GM12878 (cell line): ENCODE measurements at regions of chr17 and their contacts with region 1.

Region 1: DNA sequence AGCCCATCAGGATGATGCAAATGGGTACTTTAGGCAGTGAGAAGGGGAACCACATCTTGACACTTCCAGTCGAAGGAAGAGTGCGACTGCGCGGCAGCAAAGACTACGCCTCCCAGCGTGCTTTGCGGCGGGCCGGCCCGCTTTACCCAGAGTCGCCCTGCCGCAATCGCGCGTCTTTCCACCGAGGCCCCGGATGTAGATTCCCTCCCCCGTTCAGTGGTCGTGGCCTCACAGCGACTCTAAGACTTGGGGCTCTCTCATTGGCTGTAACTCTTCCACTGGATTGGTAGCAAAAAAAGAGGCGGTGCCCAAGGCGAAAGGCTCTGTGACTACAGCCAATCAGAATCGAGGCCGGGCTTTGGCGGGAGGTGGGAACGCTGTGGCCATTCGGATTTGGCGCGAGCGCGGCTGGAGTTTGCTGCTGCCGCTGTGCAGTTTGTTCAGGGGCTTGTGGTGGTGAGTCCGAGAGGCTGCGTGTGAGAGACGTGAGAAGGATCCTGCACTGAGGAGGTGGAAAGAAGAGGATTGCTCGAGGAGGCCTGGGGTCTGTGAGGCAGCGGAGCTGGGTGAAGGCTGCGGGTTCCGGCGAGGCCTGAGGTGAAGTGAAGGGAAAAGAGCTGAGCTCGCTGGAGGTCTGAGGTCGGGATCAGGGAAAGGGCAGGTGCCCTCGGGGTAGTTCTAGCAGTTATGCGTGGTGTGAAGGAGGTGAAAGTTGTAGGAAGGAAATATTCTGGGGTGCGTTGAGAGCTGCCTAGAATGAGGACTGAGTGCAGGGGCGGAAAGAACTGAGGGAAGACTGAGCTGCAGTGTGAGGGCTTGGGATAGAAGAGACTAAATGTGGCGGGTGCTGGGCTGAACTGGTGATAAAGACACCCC is at the start of gene CDC6:
- DNase-seq: peak; percentile 95
- ATAC-seq: peak; percentile 96
- H3K4me3 ChIP-seq: peak within 1 kb of the TSS; percentile 80
- H3K27ac ChIP-seq: peak within 1 kb of the TSS; percentile 79
- H3K4me1 ChIP-seq: peaks cover 9% of the 10 kb centered on the region
- H3K27me3 ChIP-seq: no peaks in the 10 kb centered on the region
- CTCF ChIP-seq: no peak
- EP300 ChIP-seq: no peak
- POLR2A ChIP-seq: peak; percentile 97
- RAD21 ChIP-seq: no peak
- polyA plus RNA-seq, gene CDC6: 13.3 to 18.6 TPM

Region 2: DNA sequence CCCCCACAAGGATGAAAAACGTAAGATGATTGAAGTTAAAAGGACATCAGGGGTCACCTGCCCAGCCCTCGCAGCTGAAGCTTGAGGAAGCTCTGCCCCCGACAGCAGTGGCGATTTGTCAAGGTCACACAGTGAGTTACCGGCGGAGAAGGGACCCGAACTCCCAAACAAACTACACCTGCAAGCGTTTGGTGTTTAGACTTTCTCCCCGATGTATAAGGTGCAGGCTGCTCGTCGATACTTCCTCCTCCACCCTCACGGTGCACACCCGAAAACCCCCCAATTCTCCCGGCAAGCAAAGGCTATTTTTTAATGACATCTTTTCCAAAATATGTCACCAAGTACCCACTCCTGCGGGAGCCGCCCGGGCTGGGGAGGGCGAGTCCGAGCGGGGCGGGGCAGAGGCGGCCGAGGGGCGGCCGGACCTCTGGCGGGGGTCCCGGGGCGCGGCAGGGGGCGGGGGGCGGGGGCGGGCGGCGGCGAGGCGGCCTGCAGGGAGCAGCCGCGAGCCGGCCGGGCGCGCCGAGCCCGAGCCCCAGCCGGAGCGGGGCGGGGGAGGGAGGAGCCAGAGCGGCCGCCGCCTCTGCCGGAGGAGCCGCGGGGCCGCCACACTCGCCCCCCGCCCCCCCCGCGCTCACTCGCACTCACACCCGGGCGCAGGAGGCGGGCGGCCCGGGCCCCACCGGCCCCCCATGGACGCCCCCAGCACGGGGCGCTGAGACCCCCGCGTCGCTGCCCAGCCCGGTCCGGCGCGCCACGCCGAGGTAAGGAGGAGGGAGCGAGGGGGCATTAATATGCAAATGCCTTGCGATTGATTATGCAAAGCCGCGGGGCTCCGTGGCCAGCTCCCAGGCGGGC is 225.2 kb before region 1 on chr17 and contains the start of gene THRA:
- CTCF ChIA-PET with region 1: no interaction called
- POLR2A ChIA-PET with region 1: no interaction called
- RAD21 ChIA-PET with region 1: no interaction called
- SMC1A ChIA-PET with region 1: no interaction called
- in situ Hi-C with region 1: no loop called
- intact Hi-C with region 1: no loop called
- DNase-seq: no peak
- ATAC-seq: peak; percentile 89
- H3K4me3 ChIP-seq: peak within 1 kb of the TSS; percentile 93
- H3K27ac ChIP-seq: no peak within 1 kb of the TSS
- H3K4me1 ChIP-seq: peaks cover 5% of the 10 kb centered on the region
- H3K27me3 ChIP-seq: peaks cover 10 to 11% of the 10 kb centered on the region in 2 experiments; a peak in 3 of 4 replicates
- CTCF ChIP-seq: peak in 1 of 3 experiments; percentile 27; a peak in 2 of 6 replicates
- EP300 ChIP-seq: no peak
- POLR2A ChIP-seq: no peak
- RAD21 ChIP-seq: no peak
- polyA plus RNA-seq, gene THRA: 0.03 to 0.07 TPM

Region 3: GRCh38 chr17:40191237-40192208 is 96.2 kb before region 1 on chr17:
- CTCF ChIA-PET with region 1: interaction called, 186 read pairs
- POLR2A ChIA-PET with region 1: interaction called, 4 read pairs
- RAD21 ChIA-PET with region 1: interaction called, 19 read pairs
- SMC1A ChIA-PET with region 1: interaction called, 30 read pairs
- in situ Hi-C with region 1: no loop called
- intact Hi-C with region 1: no loop called
- DNase-seq: peak; percentile 30
- ATAC-seq: peak; percentile 93
- H3K4me3 ChIP-seq: peak overlapping the region; percentile 83
- H3K27ac ChIP-seq: no peak overlapping the region
- H3K4me1 ChIP-seq: peaks cover 24% of the 10 kb centered on the region
- H3K27me3 ChIP-seq: no peaks in the 10 kb centered on the region; a peak in 1 of 4 replicates
- CTCF ChIP-seq: peak; percentile 82 to 91 (median 89)
- EP300 ChIP-seq: no peak
- POLR2A ChIP-seq: peak; percentile 57
- RAD21 ChIP-seq: peak; percentile 50; the same call in 1 of the 2 replicates

Region 4: GRCh38 chr17:40219073-40219860 is 68.5 kb before region 1 on chr17 and contains the start of gene WIPF2:
- CTCF ChIA-PET with region 1: interaction called, 27 read pairs
- POLR2A ChIA-PET with region 1: interaction called, 9 read pairs
- RAD21 ChIA-PET with region 1: interaction called, 10 read pairs
- SMC1A ChIA-PET with region 1: interaction called, 22 read pairs
- in situ Hi-C with region 1: no loop called
- intact Hi-C with region 1: loop called (anchors 5 kb)
- DNase-seq: peak; percentile 87
- ATAC-seq: peak; percentile 96
- H3K4me3 ChIP-seq: peak within 1 kb of the TSS; percentile 99
- H3K27ac ChIP-seq: peak within 1 kb of the TSS; percentile 73
- H3K4me1 ChIP-seq: peaks cover 4% of the 10 kb centered on the region; the same call in 1 of the 2 replicates
- H3K27me3 ChIP-seq: no peaks in the 10 kb centered on the region
- CTCF ChIP-seq: peak; percentile 33 to 45 (median 37); a peak in 4 of 6 replicates
- EP300 ChIP-seq: no peak
- POLR2A ChIP-seq: peak; percentile 82
- RAD21 ChIP-seq: no peak
- polyA plus RNA-seq, gene WIPF2: 4.2 to 5.5 TPM

Region 5: DNA sequence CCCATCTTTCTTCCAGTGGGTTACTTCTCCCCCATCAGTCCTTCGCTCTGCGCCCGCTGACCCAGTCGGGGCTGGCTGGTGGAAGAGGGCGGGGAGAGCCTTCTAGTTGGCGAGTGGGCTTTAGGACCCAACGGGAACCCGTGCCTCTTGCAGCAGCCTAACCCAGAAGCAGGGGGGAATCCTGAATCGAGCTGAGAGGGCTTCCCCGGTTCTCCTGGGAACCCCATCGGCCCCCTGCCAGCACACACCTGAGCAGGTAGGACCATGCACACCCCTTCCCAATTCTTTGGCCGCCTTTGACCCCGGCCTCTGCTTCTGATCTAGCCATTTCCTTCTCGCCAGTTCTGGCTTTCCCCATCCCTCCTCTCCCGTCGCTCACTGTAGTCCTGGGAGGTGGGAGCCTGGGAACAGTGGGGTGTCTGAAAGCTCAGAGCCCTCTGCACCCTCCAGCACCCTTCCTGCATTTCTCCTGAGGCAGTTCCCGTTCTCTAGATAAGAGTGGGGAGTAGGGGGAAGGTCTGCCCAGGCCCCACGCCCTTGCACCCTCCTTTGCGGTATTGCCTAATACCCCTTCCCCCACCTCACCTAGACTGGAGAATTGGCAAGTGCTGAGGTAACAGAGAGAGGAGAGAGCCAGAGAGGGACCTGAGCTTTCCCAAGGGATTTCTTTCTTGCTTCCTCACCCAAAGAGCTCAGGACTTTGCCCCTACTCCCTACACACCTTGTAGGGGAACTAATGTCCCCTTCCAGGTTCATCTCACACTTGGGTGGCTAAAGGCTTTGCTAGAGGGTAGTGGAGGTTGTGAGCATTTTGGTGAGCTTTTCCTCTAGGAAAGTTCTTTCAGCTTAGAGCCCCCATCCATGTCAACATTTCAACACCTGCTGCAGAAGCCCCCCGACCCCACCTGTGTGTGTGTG is 21.6 kb after region 1 on chr17 and contains the start of gene RARA:
- CTCF ChIA-PET with region 1: interaction called, 97 read pairs
- POLR2A ChIA-PET with region 1: interaction called, 5 read pairs
- RAD21 ChIA-PET with region 1: interaction called, 7 read pairs
- SMC1A ChIA-PET with region 1: interaction called, 11 read pairs
- in situ Hi-C with region 1: no loop called
- intact Hi-C with region 1: no loop called
- DNase-seq: no peak
- ATAC-seq: peak; percentile 68
- H3K4me3 ChIP-seq: peak within 1 kb of the TSS; percentile 70
- H3K27ac ChIP-seq: peak within 1 kb of the TSS; percentile 9; the same call in 1 of the 2 replicates
- H3K4me1 ChIP-seq: peaks cover 58% of the 10 kb centered on the region
- H3K27me3 ChIP-seq: no peaks in the 10 kb centered on the region
- CTCF ChIP-seq: no peak
- EP300 ChIP-seq: no peak
- POLR2A ChIP-seq: no peak
- RAD21 ChIP-seq: no peak
- polyA plus RNA-seq, gene RARA: 0.13 to 0.16 TPM